ENCODE measurements at regions of chrX and their contacts with region 1.

Region 1: DNA sequence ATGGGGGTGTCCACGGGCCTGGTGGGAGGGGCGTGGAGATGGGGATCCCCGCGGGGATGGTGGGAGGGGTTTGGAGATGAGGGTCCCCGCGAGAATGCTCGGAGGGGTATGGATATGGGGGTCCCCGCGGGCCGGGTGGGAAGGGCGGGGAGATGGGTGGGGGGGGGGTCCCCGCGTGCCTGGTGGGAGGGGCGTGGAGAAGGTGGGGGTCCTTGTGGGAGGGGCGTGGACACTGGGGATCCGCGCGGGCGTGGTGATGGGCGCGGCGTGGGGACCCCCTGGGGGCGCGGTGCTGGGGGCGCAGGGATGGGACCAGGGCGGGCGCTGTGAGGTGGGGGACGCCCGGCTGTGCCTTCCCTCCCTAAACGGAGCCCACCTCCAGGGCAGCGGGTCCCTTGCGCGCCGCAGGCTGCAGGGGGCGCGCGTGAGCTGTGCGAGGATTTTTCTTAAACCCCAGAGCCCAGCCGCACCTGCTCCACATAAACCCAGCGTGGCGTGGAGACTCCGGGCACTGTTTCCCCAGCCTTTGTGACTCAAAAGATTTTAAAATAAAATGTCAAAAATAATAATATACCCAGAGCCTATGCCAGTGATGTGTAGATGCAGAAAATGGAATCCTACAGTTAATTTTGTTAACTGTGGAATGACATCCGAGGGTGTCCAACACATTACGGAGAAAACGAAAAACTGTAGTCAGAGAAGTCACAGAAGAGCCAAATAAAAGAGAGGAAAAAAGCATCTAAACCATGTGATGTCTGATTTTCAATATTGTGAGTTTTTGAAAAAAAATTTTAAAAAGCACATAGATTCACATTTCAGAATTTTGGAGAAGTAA is 1.5 kb upstream of the ASMTL start:
- DNase-seq: peak; percentile 93
- ATAC-seq: peak; percentile 30 to 43 (median 37)
- H3K4me3 ChIP-seq: peak overlapping the region; percentile 31
- H3K4me3 Mint-ChIP-seq: peak overlapping the region; percentile 26
- H3K27ac ChIP-seq: peak overlapping the region; percentile 80
- H3K27ac Mint-ChIP-seq: peak overlapping the region; percentile 42 to 92
- H3K4me1 ChIP-seq: peaks cover 48% of the 10 kb centered on the region
- H3K4me1 Mint-ChIP-seq: peaks cover 2 to 44% of the 10 kb centered on the region in 2 donors
- H3K27me3 ChIP-seq: no peaks in the 10 kb centered on the region
- H3K27me3 Mint-ChIP-seq: no peaks in the 10 kb centered on the region
- CTCF ChIP-seq: peak; percentile 99

Region 2: GRCh38 chrX:1468250-1468772 is 14.1 kb after region 1 on chrX:
- intact Hi-C with region 1: loop called (anchors 1 kb)
- DNase-seq: peak; percentile 73 to 89
- ATAC-seq: peak; percentile 61 to 71 (median 66)
- H3K4me3 ChIP-seq: no peak overlapping the region
- H3K4me3 Mint-ChIP-seq: peak overlapping the region; percentile 93
- H3K27ac ChIP-seq: peak overlapping the region; percentile 83
- H3K27ac Mint-ChIP-seq: peak overlapping the region; percentile 90 to 91
- H3K4me1 ChIP-seq: peaks cover 93% of the 10 kb centered on the region
- H3K4me1 Mint-ChIP-seq: peaks cover 73 to 91% of the 10 kb centered on the region in 2 donors
- H3K27me3 ChIP-seq: no peaks in the 10 kb centered on the region
- H3K27me3 Mint-ChIP-seq: no peaks in the 10 kb centered on the region
- CTCF ChIP-seq: no peak

Region 3: GRCh38 chrX:1537035-1537715 is 83.0 kb after region 1 on chrX and contains the start of gene P2RY8:
- intact Hi-C with region 1: loop called (anchors 1 kb)
- DNase-seq: peak; percentile 69 to 90
- ATAC-seq: peak; percentile 80 to 92 (median 85)
- H3K4me3 ChIP-seq: peak within 1 kb of the TSS; percentile 96
- H3K4me3 Mint-ChIP-seq: peak within 1 kb of the TSS; percentile 93
- H3K27ac ChIP-seq: peak within 1 kb of the TSS; percentile 98
- H3K27ac Mint-ChIP-seq: peak within 1 kb of the TSS; percentile 95 to 97
- H3K4me1 ChIP-seq: peaks cover 25% of the 10 kb centered on the region
- H3K4me1 Mint-ChIP-seq: peaks cover 21 to 26% of the 10 kb centered on the region in 2 donors
- H3K27me3 ChIP-seq: no peaks in the 10 kb centered on the region
- H3K27me3 Mint-ChIP-seq: no peaks in the 10 kb centered on the region
- CTCF ChIP-seq: no peak
- total RNA-seq, gene P2RY8: 73.7 to 114 (median 107) TPM

Region 4: DNA sequence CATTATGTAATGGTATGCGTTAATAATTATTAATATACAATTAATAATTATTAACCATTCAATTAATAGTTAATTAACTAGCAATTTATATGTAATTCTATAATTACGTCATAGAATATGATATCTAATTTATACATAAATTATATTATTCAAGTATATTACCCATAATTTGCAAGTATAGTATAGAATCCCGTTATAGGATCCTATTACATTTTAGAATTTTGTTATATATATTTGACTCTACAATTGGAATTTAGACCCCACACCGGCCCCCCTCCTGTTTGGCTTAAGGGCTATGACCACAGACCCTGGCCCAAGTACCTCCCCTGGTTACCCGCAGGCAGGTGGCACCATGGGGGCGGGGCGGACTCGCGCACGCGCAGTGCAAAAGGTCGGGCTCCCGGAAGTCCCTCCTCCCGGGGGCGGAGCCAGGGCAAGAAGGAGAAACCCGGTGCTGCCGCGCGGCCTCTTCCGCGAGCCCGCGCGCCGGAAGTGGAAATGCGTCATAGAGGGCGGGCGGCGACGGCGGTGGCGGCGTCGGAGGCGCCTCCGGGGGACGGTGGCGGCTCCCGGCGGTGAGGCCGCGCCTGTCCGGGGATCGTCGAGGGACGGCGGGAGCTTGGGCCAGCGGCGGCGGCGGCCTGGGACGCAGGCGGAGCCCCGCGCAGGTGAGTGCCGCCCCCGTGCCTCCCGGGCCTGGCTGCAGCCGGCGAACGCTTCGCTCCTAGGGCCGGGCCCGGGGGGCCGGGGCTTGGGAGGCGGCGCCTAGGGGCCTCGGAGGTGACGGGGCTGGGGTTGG is 137.1 kb after region 1 on chrX and contains the start of gene AKAP17A:
- intact Hi-C with region 1: loop called (anchors 2 kb)
- DNase-seq: peak; percentile 97 to 99
- ATAC-seq: peak; percentile 93 to 94 (median 94)
- H3K4me3 ChIP-seq: peak within 1 kb of the TSS; percentile 91
- H3K4me3 Mint-ChIP-seq: peak within 1 kb of the TSS; percentile 92
- H3K27ac ChIP-seq: peak within 1 kb of the TSS; percentile 85
- H3K27ac Mint-ChIP-seq: peak within 1 kb of the TSS; percentile 87 to 93
- H3K4me1 ChIP-seq: peaks cover 29% of the 10 kb centered on the region
- H3K4me1 Mint-ChIP-seq: peaks cover 20 to 35% of the 10 kb centered on the region in 2 donors
- H3K27me3 ChIP-seq: no peaks in the 10 kb centered on the region
- H3K27me3 Mint-ChIP-seq: no peaks in the 10 kb centered on the region
- CTCF ChIP-seq: peak; percentile 9
- total RNA-seq, gene AKAP17A: 120 to 141 (median 121) TPM

Region 5: DNA sequence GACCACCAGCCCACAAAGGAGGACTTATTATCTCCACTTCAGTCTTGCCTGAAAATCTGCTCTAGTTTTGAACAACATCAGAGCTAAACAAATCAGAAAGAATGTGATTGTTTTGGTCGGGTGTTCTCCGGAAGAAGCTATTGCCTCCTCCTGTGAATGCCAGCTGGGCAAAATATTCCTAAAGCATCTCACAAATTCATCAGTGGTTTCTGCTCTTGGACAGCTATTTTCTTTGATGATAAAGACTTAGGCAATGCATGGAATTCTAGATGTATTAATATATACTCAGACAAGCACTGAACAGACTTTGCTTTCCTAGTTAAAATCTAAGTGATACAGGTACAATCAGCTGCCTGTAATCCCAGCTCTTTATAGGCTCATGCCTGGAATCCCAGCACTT is 232.5 kb after region 1 on chrX:
- intact Hi-C with region 1: no loop called
- DNase-seq: no peak
- ATAC-seq: no peak
- H3K4me3 ChIP-seq: no peak overlapping the region
- H3K4me3 Mint-ChIP-seq: no peak overlapping the region
- H3K27ac ChIP-seq: no peak overlapping the region
- H3K27ac Mint-ChIP-seq: no peak overlapping the region
- H3K4me1 ChIP-seq: no peaks in the 10 kb centered on the region
- H3K4me1 Mint-ChIP-seq: peaks cover 20 to 24% of the 10 kb centered on the region in 2 donors
- H3K27me3 ChIP-seq: no peaks in the 10 kb centered on the region
- H3K27me3 Mint-ChIP-seq: no peaks in the 10 kb centered on the region
- CTCF ChIP-seq: no peak

Measured in natural killer cell (primary cell).